ENCODE measurements at regions of chr3 and their contacts with region 1.

Region 1: DNA sequence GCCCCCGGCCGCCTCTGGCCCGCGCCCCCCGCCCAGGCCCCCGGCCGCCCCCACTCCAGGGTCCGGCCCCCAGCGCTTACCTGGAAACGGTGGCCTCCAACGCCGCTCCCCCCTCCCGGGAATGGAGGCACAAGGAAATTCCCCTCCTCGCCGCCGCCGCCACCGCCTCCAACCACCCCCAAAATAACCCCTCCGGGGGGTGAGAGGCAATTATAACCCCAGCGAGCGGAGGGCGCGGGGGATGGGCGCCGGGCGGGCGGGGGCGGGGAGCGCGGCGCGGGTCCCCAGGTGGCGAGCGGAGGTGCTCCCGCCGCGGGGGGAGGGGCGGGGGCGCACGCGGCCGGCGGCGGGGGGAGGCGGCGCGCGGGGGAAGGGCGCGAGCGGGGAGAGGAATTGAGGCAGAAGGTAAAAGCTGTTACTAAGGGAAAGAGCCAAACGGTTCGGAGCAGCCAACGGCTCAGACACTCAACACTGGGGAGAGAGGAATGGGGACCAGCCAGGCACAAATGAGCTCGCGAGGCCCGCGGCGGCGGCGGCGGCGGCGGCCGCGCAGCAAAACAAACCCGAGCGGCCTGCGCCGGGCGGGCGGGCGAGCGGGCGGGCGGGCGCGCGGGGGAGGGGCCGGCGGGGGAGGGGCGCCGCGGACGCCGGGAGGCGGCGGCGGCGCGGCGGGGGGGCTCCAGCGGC is at the start of gene TBL1XR1:
- DNase-seq: peak; percentile 92 to 97
- H3K4me3 ChIP-seq: peak within 1 kb of the TSS; percentile 81 to 91
- H3K27ac ChIP-seq: peak within 1 kb of the TSS; percentile 92 to 99
- H3K4me1 ChIP-seq: peaks cover 0 to 28% (median 8%) of the 10 kb centered on the region in 4 donors
- H3K27me3 ChIP-seq: no peaks in the 10 kb centered on the region
- CTCF ChIP-seq: no peak

Region 2: DNA sequence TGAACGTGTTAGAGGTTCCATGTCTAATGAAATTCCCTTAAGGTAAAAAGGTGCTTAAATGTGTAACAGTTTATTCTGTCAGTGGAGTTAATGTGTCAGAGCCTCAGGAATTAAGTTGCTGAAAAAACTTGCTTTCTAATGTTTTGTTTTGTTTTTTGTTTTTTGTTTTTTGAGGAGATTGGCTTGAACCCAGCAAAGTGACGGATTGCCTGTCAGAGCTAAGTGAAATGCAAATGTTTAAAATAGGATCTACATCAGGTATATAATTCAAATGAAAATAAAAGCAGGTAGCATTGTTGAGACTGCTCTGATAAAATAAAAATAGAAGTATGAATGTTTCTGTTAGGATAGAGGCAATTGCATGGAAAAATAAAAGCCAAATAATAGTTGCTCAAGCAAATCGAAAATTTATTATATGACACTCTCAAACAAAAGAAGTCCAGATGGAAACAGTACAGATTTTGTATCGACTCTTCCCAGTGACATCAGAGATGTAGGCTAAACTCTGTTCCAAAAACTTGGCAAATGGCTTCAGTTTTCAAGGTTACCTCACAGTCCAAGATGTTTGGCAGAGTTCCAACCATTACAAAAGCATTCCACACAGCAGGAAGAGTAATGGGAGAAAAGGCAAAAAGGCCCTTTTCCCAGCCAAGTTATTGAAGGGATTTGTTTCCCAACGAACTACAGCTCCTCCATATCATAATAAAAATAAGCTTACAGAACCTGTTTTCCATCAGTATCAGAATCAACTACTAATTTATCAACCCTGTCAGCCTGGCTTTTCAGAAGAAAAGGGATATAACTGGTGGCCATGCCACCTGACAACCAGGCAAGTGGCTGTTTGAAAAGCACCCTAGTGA is 290.9 kb before region 1 on chr3:
- intact Hi-C with region 1: no loop called
- DNase-seq: no peak
- H3K4me3 ChIP-seq: no peak overlapping the region
- H3K27ac ChIP-seq: peak overlapping the region in 1 of 2 donors; percentile 24
- H3K4me1 ChIP-seq: peaks cover 0 to 29% (median 8%) of the 10 kb centered on the region in 4 donors
- H3K27me3 ChIP-seq: no peaks in the 10 kb centered on the region
- CTCF ChIP-seq: no peak

Region 3: GRCh38 chr3:177359593-177360357 is 162.6 kb after region 1 on chr3:
- intact Hi-C with region 1: loop called (anchors 1 kb)
- DNase-seq: peak; percentile 93 to 97
- H3K4me3 ChIP-seq: peak overlapping the region; percentile 31 to 49
- H3K27ac ChIP-seq: peak overlapping the region; percentile 74 to 77
- H3K4me1 ChIP-seq: peaks cover 3 to 62% (median 43%) of the 10 kb centered on the region in 4 donors
- H3K27me3 ChIP-seq: no peaks in the 10 kb centered on the region
- CTCF ChIP-seq: peak in 1 of 2 experiments; percentile 18

Region 4: GRCh38 chr3:177597311-177598096 is 400.3 kb after region 1 on chr3:
- intact Hi-C with region 1: loop called (anchors 10 kb)
- DNase-seq: peak; percentile 72 to 75
- H3K4me3 ChIP-seq: no peak overlapping the region
- H3K27ac ChIP-seq: peak overlapping the region; percentile 47 to 72
- H3K4me1 ChIP-seq: peaks cover 0 to 44% (median 34%) of the 10 kb centered on the region in 4 donors
- H3K27me3 ChIP-seq: no peaks in the 10 kb centered on the region
- CTCF ChIP-seq: no peak

Region 5: DNA sequence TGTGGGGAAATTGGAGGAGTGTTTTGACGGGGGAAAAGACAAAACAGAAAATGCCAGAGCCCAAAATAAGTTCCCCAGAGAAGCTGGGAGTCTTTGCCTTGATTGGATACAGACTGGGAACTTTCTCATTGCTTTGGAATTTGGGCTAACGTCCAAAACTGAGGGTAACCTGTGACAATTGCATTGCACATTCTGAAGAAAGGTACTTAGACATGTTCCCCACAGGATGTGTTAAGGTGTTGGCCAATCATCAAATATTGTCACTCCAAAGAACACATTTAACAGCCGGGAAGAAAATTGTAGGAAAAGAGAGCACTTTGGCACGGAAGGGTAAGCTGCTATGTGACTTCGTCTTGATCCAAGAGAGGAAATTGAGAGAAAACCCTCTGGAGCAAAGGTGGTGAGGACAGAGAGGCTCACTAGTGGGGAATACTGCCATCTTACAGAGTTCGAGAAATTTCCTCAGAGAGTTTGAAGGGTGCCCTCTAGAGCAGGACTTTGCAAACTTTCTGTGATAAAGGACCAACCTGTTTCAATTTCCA is 619.6 kb after region 1 on chr3:
- intact Hi-C with region 1: loop called (anchors 10 kb)
- DNase-seq: no peak
- H3K4me3 ChIP-seq: no peak overlapping the region
- H3K27ac ChIP-seq: peak overlapping the region; percentile 64 to 72
- H3K4me1 ChIP-seq: peaks cover 0 to 53% (median 33%) of the 10 kb centered on the region in 4 donors
- H3K27me3 ChIP-seq: no peaks in the 10 kb centered on the region
- CTCF ChIP-seq: peak; percentile 7 to 27

Region 6: GRCh38 chr3:178325330-178325729 is 1128.1 kb after region 1 on chr3:
- intact Hi-C with region 1: loop called (anchors 10 kb)
- DNase-seq: no peak
- H3K4me3 ChIP-seq: no peak overlapping the region
- H3K27ac ChIP-seq: peak overlapping the region in 1 of 2 donors; percentile 13
- H3K4me1 ChIP-seq: peaks cover 0 to 37% (median 8%) of the 10 kb centered on the region in 4 donors
- H3K27me3 ChIP-seq: no peaks in the 10 kb centered on the region
- CTCF ChIP-seq: peak; percentile 39 to 44